ENCODE measurements at regions of chr3 and their contacts with region 1.

Region 1: GRCh38 chr3:114213627-114214541 is 23.5 kb downstream of the ZNF80 start:
- DNase-seq: peak; percentile 71
- H3K4me3 ChIP-seq: peak overlapping the region; percentile 36
- H3K27ac ChIP-seq: no peak overlapping the region
- H3K4me1 ChIP-seq: peaks cover 11% of the 10 kb centered on the region
- H3K27me3 ChIP-seq: no peaks in the 10 kb centered on the region
- CTCF ChIP-seq: peak; percentile 39; the same call in 1 of the 2 replicates

Region 2: GRCh38 chr3:114290911-114291901 is 77.3 kb after region 1 on chr3:
- CTCF ChIA-PET with region 1: interaction called, 12 read pairs
- POLR2A ChIA-PET with region 1: no interaction called
- intact Hi-C with region 1: no loop called
- DNase-seq: peak; percentile 94
- H3K4me3 ChIP-seq: no peak overlapping the region
- H3K27ac ChIP-seq: no peak overlapping the region
- H3K4me1 ChIP-seq: no peaks in the 10 kb centered on the region
- H3K27me3 ChIP-seq: no peaks in the 10 kb centered on the region
- CTCF ChIP-seq: peak; percentile 95

Measured in A673 (cell line).